A673 (cell line): ENCODE measurements at regions of chr6 and their contacts with region 1.

Region 1: GRCh38 chr6:89145787-89146646 is at the start of gene PM20D2:
- DNase-seq: peak; percentile 73
- H3K4me3 ChIP-seq: peak within 1 kb of the TSS; percentile 69
- H3K27ac ChIP-seq: peak within 1 kb of the TSS; percentile 85
- H3K4me1 ChIP-seq: peaks cover 17% of the 10 kb centered on the region
- H3K27me3 ChIP-seq: no peaks in the 10 kb centered on the region
- CTCF ChIP-seq: no peak
- total RNA-seq, gene PM20D2: 37.2 and 41.7 TPM in 2 replicates

Region 2: GRCh38 chr6:89242574-89243330 is 96.7 kb after region 1 on chr6:
- CTCF ChIA-PET with region 1: no interaction called
- POLR2A ChIA-PET with region 1: no interaction called
- intact Hi-C with region 1: loop called (anchors 5 kb)
- DNase-seq: peak; percentile 91
- H3K4me3 ChIP-seq: no peak overlapping the region
- H3K27ac ChIP-seq: peak overlapping the region; percentile 63
- H3K4me1 ChIP-seq: peaks cover 37% of the 10 kb centered on the region
- H3K27me3 ChIP-seq: no peaks in the 10 kb centered on the region
- CTCF ChIP-seq: peak; percentile 68